ENCODE measurements at regions of chr1 and their contacts with region 1.

Region 1: DNA sequence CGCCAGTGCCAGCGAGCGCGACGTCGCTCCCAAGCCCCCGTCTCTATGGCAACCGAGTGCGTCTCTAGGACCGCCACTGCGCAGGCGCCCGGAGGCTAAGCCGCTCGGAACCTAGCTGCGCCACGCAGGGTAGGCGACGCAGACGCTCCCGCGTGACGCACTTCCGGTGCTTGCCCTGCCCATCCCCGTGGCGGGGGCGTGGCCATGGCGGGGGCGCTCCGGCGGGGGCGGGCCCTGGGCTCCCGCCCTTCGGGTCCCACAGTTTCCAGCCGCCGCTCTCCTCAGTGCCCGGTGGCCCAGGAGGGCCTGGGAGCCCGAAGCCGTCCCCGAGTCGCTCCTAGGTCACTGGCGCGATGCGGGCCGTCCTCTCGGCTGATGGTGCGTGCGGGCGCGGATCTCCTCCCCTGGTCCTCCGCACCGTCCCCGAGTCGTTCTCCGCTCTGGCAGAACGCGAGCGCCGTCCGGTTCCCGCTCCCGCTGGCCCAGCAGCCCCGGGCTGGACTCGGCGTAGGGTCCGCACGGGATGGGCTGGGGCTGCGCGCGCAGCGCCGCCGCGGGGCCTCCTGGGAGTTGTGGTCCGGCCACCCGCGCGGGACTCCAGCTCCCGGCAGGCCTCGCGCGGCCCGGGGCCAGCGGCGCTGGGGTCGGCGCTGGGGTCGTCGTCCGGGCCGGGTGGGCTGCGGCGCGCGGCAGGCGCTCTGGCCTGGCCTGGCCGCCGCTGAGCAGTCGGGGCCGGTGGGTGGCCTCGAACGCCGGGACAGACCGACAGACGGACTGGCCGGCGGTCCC is at the start of gene MIB2:
- DNase-seq: peak; percentile 98
- H3K4me3 ChIP-seq: peak within 1 kb of the TSS; percentile 86 to 99 (median 94)
- H3K27ac ChIP-seq: peak within 1 kb of the TSS; percentile 99 to 100 (median 100)
- H3K4me1 ChIP-seq: peaks cover 27 to 47% (median 42%) of the 10 kb centered on the region in 4 donors
- H3K27me3 ChIP-seq: no peaks in the 10 kb centered on the region
- CTCF ChIP-seq: no peak
- EP300 ChIP-seq: no peak
- POLR2A ChIP-seq: peak; percentile 71
- total RNA-seq, gene MIB2: 33.6 to 99.9 (median 74.6) TPM

Region 2: GRCh38 chr1:1574721-1575537 is 40.5 kb before region 1 on chr1 and contains the start of gene SSU72:
- intact Hi-C with region 1: loop called (anchors 2 kb)
- DNase-seq: peak; percentile 97
- H3K4me3 ChIP-seq: peak within 1 kb of the TSS; percentile 96 to 100 (median 99)
- H3K27ac ChIP-seq: peak within 1 kb of the TSS; percentile 99 to 100 (median 99)
- H3K4me1 ChIP-seq: peaks cover 28 to 50% (median 46%) of the 10 kb centered on the region in 4 donors
- H3K27me3 ChIP-seq: no peaks in the 10 kb centered on the region
- CTCF ChIP-seq: peak in 1 of 3 experiments; percentile 23
- EP300 ChIP-seq: no peak
- POLR2A ChIP-seq: peak; percentile 92
- total RNA-seq, gene SSU72: 78.7 to 134 (median 112) TPM